Right cardiac atrium (tissue), 5 donors: ENCODE measurements at regions of chr16 and their contacts with region 1.

Region 1: DNA sequence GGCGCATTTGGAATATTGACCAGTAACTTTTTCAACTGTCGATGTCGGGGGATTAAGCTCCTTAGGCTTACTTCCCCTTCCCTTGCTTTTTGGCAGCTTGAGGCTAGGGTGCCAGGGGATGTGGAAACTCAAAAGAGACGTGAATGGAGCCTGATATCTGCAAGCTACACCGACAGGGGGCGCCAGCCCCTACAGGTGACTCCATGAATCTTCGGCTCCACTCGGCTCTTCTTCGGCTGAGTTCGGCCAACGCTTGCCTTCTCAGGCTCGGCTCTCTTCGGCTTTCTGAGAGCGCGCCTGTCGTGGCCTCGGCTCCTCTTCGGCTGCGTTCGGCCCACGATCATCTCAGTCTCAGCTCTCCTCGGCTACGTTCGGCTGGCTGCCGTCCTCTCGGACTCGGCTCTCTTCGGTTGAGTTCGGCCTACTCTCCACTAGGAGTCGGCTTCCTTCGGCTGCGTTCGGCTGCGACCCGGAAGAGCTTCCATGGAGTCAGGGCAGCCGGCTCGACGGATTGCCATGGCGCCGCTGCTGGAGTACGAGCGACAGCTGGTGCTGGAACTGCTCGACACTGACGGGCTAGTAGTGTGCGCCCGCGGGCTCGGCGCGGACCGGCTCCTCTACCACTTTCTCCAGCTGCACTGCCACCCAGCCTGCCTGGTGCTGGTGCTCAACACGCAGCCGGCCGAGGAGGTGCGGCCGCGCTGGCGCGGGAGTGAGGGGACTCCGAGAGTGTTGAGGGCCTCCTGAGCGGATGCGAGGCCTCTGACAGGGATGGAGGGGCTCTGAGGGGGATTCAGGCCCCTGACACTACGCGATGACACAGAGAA is at the start of gene ERCC4:
- DNase-seq: peak; percentile 100
- ATAC-seq: peak; percentile 97 to 98
- H3K4me3 ChIP-seq: peak within 1 kb of the TSS; percentile 63
- H3K27ac ChIP-seq: peak within 1 kb of the TSS; percentile 59
- H3K4me1 ChIP-seq: no peaks in the 10 kb centered on the region
- H3K27me3 ChIP-seq: no peaks in the 10 kb centered on the region
- total RNA-seq, gene ERCC4: 9.2 to 14.4 (median 10.6) TPM

Region 2: GRCh38 chr16:13829697-13830299 is 90.1 kb before region 1 on chr16:
- intact Hi-C with region 1: no loop called
- DNase-seq: no peak
- ATAC-seq: no peak
- H3K4me3 ChIP-seq: no peak overlapping the region
- H3K27ac ChIP-seq: no peak overlapping the region
- H3K4me1 ChIP-seq: no peaks in the 10 kb centered on the region
- H3K27me3 ChIP-seq: no peaks in the 10 kb centered on the region

Region 3: DNA sequence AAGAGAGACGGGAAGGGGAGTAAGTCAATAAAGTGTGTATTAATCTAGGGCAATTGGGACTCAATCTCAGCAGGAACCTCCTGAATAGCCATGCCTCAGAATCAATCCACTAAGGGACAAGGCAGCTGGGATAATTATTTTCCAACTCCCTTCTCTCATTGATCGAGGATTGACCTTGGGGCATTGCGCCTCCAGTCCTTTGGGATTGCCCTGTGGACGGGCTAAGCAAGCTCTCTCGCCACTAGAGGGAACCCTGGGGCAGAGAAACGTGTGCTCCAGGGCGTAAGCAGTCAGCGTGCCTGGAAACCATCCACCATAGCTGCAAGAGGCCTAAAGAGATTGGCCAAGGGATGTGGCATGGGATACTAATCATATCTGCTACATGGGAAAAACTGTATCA is 53.8 kb before region 1 on chr16:
- intact Hi-C with region 1: loop called in 2 of 4 experiments (anchors 2 to 5 kb)
- DNase-seq: peak; percentile 76 to 92 (median 82)
- ATAC-seq: peak; percentile 96 to 97
- H3K4me3 ChIP-seq: no peak overlapping the region
- H3K27ac ChIP-seq: no peak overlapping the region
- H3K4me1 ChIP-seq: no peaks in the 10 kb centered on the region
- H3K27me3 ChIP-seq: no peaks in the 10 kb centered on the region

Region 4: GRCh38 chr16:14193316-14193871 is 273.5 kb after region 1 on chr16:
- intact Hi-C with region 1: loop called in 2 of 4 experiments (anchors 10 kb)
- DNase-seq: no peak
- ATAC-seq: no peak
- H3K4me3 ChIP-seq: no peak overlapping the region
- H3K27ac ChIP-seq: peak overlapping the region; percentile 17
- H3K4me1 ChIP-seq: peaks cover 6% of the 10 kb centered on the region
- H3K27me3 ChIP-seq: no peaks in the 10 kb centered on the region

Region 5: DNA sequence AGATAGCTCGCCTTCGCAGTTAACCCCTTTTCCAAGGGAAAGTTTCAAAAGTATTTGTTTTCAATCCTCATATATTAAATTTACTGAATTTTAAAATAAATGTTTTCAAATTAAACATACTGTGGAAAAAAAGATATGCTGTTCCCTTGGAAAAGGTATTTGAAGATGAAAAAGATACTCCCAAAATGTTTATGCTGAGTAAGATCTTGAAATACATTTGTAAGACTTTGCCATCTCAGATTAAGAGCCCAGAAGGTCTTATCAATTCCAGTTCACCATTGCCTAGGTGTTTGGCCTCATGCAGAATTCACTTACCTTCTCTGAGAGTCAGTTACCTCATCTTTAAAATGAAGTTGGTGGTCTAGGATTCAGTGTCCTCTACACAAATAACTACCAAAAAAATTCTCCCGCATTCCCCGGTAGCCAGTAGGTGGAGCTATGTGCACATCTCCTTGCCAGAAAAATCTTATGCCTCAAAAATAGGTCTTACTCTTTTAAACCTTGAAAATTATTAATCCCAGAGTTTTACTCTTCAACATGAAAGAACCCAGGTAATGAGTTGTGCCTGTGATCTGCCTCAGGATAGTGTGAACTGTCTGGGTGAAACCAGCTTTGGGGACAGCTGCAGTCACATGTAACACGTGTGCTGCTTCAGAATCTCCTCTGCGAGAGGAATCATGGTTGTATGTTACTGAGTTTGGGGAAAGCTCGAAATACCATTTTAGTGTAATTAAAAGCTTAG is 329.6 kb after region 1 on chr16:
- intact Hi-C with region 1: loop called in 2 of 4 experiments (anchors 10 kb)
- DNase-seq: no peak
- ATAC-seq: no peak
- H3K4me3 ChIP-seq: no peak overlapping the region
- H3K27ac ChIP-seq: no peak overlapping the region
- H3K4me1 ChIP-seq: no peaks in the 10 kb centered on the region
- H3K27me3 ChIP-seq: no peaks in the 10 kb centered on the region

Region 6: DNA sequence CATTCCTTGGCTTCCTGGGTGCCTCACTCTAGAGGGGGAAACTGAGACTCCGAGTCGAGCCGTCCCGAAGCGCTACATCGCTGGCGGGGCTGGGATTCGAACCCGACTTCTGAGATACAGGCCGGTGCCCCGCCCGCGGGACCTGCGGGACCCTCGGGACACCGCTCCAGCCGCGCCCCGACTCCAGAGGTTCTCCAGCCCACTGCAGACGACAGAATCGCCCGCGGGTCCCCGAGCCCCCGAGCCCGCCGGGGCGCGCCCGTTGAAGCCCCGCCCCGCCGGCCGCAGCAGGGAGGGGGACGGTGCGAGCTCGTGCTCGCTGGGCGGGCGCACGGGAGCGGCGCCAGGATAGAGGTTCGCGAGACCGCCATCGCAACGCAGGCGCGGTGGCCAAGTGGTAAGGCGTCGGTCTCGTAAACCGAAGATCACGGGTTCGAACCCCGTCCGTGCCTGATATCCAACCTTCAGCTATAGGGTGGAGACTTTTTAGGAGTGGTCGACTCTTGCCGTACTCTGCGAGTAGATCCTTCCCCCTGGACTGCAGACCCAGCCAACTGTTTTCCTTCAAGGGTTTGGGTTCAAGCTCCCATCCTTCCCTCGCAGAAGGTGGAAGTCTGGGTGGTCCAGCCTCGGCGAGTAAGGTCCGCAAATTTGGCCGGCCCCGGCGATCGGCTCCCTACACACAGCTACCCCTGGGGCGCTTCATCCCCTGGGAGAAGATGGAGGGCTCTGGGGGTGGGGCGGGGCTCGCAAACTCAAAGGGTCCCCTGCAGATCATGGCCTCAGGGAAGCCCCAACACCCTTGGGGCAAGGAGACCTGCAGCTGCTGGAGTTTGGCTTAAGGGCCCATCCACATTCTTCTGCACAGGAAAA is 365.9 kb after region 1 on chr16:
- intact Hi-C with region 1: loop called in 1 of 4 experiments (anchors 10 kb)
- DNase-seq: peak; percentile 90 to 98 (median 97)
- ATAC-seq: peak; percentile 95 to 96
- H3K4me3 ChIP-seq: peak overlapping the region; percentile 96
- H3K27ac ChIP-seq: peak overlapping the region; percentile 88
- H3K4me1 ChIP-seq: peaks cover 2% of the 10 kb centered on the region
- H3K27me3 ChIP-seq: no peaks in the 10 kb centered on the region

Region 7: GRCh38 chr16:14529010-14529669 is 609.2 kb after region 1 on chr16:
- intact Hi-C with region 1: loop called in 1 of 4 experiments (anchors 10 kb)
- DNase-seq: peak; percentile 65 to 83 (median 71)
- ATAC-seq: peak; percentile 87 to 88
- H3K4me3 ChIP-seq: peak overlapping the region; percentile 39
- H3K27ac ChIP-seq: peak overlapping the region; percentile 73
- H3K4me1 ChIP-seq: peaks cover 3% of the 10 kb centered on the region
- H3K27me3 ChIP-seq: no peaks in the 10 kb centered on the region